ENCODE measurements at regions of chr7 and their contacts with region 1.

Region 1: DNA sequence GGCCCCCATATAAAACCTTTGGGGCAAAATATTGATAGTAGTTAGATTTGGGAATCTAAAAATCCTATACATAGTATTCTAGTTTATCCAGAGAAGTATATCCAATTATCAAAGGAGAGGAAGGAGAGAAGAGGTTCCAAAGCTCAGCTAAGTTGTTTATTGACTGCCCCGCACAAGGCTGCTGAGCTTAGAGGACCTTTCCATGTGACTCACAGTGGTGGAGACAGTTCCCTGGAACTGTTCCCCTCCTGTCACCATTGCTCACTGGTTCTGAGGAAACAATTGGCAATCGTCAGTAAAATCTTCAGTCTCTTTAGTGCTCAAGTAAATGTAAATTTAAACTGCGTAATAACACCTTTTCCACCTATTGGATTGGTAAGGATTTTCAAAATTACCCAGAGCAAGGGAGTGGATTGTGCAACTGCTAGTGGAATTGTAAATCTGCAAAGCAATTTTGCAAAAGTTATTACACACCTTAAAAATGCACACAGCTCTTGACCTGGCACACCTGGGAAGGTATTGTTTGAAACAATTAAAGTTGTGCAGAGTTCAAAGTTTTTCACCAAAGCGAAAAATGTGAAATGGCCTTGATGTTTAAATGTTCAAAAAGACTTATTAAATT is 63.1 kb downstream of the EEPD1 start:
- H3K4me3 Mint-ChIP-seq: no peak overlapping the region
- H3K27ac Mint-ChIP-seq: peak overlapping the region; percentile 78
- H3K4me1 Mint-ChIP-seq: peaks cover 63% of the 10 kb centered on the region
- H3K27me3 Mint-ChIP-seq: no peaks in the 10 kb centered on the region

Region 2: DNA sequence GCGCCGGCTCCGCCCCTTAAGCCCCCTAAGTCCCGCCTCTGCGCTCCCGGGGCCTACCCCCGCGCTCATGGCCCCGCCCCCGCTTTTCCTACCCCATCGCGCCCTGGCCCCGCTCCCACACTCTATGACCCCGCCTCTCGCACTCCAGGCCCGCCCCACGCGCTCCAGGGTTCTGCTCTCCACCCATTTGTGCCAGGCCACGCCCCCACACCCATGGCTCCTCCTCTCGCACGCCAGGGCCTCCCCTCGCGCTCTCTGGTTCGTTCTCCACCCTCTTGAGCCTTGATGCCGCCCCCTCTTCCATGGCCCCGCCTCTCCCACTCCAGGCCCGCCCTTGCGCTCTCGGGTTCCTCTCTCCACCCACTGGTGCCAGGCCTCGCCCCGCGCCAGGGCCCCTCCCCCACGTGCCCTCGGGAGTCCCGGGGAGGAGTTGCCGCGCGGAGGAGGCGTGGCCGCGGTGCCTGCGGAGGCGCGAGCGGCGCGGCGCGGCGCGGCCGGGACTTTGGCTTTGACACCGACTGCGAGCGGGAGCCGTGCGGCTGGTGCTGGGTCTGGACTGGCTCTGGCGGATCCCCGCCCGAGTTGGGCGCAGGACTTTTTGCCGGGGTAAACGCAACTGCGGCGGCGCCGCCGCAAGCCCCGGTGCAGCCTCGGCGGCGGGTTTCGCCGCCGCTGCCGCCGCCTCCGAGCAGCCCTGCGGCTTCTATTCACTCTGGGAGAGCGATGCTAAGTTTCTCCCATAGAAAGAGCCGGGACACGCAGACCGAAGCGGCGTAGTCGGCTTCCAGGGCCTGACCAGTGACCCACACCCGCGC is 63.2 kb before region 1 on chr7 and contains the start of gene EEPD1:
- intact Hi-C with region 1: loop called (anchors 5 kb)
- H3K4me3 Mint-ChIP-seq: peak within 1 kb of the TSS; percentile 88
- H3K27ac Mint-ChIP-seq: peak within 1 kb of the TSS; percentile 89
- H3K4me1 Mint-ChIP-seq: peaks cover 71% of the 10 kb centered on the region
- H3K27me3 Mint-ChIP-seq: no peaks in the 10 kb centered on the region

Region 3: DNA sequence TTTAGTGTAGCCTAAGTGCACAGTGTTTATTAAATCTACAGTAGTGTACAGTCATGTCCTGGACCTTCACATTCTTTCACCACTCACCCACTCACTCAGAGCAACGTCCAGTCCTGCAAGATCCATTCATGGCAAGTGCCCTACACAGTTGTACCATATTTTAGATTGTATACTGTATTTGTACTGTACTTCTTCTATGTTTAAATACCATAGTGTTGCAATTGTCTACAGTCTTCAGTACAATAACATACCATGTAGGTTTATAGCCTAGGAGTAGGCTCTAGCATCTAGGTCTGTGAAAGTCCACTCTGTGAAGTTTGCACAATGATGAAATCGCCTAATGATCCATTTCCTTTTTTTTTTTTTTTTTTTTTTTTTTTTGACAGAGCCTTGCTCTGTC is 51.1 kb before region 1 on chr7:
- intact Hi-C with region 1: no loop called
- H3K4me3 Mint-ChIP-seq: no peak overlapping the region
- H3K27ac Mint-ChIP-seq: no peak overlapping the region
- H3K4me1 Mint-ChIP-seq: peaks cover 15% of the 10 kb centered on the region
- H3K27me3 Mint-ChIP-seq: no peaks in the 10 kb centered on the region

Region 4: DNA sequence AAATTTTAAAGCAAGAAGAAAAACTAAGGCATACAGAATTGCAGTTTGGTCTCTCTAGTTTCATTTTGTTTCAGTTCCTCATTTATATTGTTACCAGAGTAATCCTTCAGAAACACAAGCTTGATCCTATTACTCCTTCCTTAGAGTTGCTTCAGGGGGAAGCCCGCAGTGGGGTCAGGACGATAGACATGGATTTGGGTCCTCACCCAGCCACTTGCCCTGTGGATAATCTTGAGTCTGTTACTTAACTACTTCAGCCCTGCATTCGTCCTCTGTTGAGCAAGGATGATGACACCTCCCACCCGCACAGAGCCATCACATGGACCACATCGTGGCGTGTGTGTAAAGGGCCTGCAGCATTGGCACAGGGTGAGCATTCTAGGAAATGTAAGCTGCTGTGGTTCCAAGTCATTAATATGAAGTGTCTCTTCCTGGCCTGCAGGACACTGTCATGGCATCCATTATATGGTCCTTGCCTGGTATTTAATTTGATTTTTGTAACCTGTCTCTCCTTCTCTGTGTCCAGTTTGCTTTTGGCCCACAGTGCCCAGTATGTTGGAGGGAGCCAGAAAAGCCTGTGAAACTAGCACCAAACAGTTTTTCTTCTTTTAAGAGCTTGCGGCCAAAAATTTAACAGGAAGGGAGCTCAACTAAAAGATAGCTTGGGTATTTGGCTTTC is 48.1 kb after region 1 on chr7:
- intact Hi-C with region 1: loop called (anchors 2 kb)
- H3K4me3 Mint-ChIP-seq: no peak overlapping the region
- H3K27ac Mint-ChIP-seq: peak overlapping the region; percentile 85
- H3K4me1 Mint-ChIP-seq: peaks cover 68% of the 10 kb centered on the region
- H3K27me3 Mint-ChIP-seq: no peaks in the 10 kb centered on the region

Measured in dendritic cell treated with granulocyte-macrophage colony-stimulating factor and Interleukin-4, amounts not matched to agents 40 ng/mL and 50 ng/mL, for 4 days (primary cell).